CD4-positive, alpha-beta T cell (primary cell): ENCODE measurements at regions of chr15 and their contacts with region 1.

Region 1: GRCh38 chr15:39686000-39686613 is 96.5 kb downstream of the FSIP1 start:
- DNase-seq: peak in 9 of 14 experiments; percentile 3 to 70 (median 12)
- ATAC-seq: no peak
- H3K4me3 ChIP-seq: no peak overlapping the region
- H3K4me3 Mint-ChIP-seq: no peak overlapping the region
- H3K27ac ChIP-seq: no peak overlapping the region
- H3K27ac Mint-ChIP-seq: no peak overlapping the region
- H3K4me1 ChIP-seq: no peaks in the 10 kb centered on the region
- H3K4me1 Mint-ChIP-seq: no peaks in the 10 kb centered on the region
- H3K27me3 ChIP-seq: no peaks in the 10 kb centered on the region
- H3K27me3 Mint-ChIP-seq: no peaks in the 10 kb centered on the region
- CTCF ChIP-seq: peak; percentile 94

Region 2: GRCh38 chr15:38576837-38577236 is 1109.3 kb before region 1 on chr15:
- CTCF ChIA-PET with region 1: no interaction called
- POLR2A ChIA-PET with region 1: no interaction called
- intact Hi-C with region 1: no loop called
- DNase-seq: peak in 1 of 14 experiments; percentile 74
- ATAC-seq: no peak
- H3K4me3 ChIP-seq: no peak overlapping the region
- H3K4me3 Mint-ChIP-seq: peak overlapping the region; percentile 1
- H3K27ac ChIP-seq: peak overlapping the region in 1 of 2 donors; percentile 0
- H3K27ac Mint-ChIP-seq: peak overlapping the region; percentile 11
- H3K4me1 ChIP-seq: peaks cover 11% of the 10 kb centered on the region
- H3K4me1 Mint-ChIP-seq: peaks cover 32% of the 10 kb centered on the region
- H3K27me3 ChIP-seq: no peaks in the 10 kb centered on the region
- H3K27me3 Mint-ChIP-seq: no peaks in the 10 kb centered on the region
- CTCF ChIP-seq: no peak

Region 3: DNA sequence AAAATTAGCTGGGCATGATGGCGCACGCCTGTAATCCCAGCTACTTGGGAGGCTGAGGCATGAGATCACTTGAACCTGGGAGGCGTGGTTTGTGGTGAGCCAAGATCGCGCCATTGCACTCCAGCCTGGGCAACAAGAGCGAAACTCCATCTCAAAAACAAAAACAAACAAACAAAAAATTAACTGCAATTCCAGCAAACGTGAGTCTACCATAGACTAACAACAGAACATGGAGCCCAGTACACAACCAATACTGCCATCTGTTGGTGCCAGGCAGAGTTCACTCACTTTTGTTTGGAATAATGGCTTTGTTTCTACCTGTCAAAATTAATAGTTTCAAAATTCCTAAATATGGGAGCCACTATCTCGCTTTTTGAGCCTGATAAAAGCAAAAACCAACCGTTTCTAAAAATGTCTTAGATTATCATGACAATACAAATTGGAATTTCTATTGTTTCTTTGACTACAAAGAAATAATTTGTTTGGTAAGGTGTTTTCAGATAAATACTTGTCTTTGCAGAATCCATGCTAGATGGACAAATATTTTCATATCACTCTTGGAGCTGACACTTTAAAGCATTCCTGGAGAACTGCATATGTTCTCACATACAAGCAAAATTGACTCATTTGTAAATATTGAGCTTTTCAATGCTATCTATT is 188.9 kb after region 1 on chr15:
- CTCF ChIA-PET with region 1: no interaction called
- POLR2A ChIA-PET with region 1: no interaction called
- intact Hi-C with region 1: loop called in 1 of 2 experiments (anchors 5 kb)
- DNase-seq: peak in 5 of 14 experiments; percentile 6 to 51 (median 24)
- ATAC-seq: no peak
- H3K4me3 ChIP-seq: no peak overlapping the region
- H3K4me3 Mint-ChIP-seq: no peak overlapping the region
- H3K27ac ChIP-seq: no peak overlapping the region
- H3K27ac Mint-ChIP-seq: no peak overlapping the region
- H3K4me1 ChIP-seq: no peaks in the 10 kb centered on the region
- H3K4me1 Mint-ChIP-seq: no peaks in the 10 kb centered on the region
- H3K27me3 ChIP-seq: peaks cover 0 to 8% of the 10 kb centered on the region in 2 experiments
- H3K27me3 Mint-ChIP-seq: peaks cover 4% of the 10 kb centered on the region
- CTCF ChIP-seq: peak; percentile 58

Region 4: DNA sequence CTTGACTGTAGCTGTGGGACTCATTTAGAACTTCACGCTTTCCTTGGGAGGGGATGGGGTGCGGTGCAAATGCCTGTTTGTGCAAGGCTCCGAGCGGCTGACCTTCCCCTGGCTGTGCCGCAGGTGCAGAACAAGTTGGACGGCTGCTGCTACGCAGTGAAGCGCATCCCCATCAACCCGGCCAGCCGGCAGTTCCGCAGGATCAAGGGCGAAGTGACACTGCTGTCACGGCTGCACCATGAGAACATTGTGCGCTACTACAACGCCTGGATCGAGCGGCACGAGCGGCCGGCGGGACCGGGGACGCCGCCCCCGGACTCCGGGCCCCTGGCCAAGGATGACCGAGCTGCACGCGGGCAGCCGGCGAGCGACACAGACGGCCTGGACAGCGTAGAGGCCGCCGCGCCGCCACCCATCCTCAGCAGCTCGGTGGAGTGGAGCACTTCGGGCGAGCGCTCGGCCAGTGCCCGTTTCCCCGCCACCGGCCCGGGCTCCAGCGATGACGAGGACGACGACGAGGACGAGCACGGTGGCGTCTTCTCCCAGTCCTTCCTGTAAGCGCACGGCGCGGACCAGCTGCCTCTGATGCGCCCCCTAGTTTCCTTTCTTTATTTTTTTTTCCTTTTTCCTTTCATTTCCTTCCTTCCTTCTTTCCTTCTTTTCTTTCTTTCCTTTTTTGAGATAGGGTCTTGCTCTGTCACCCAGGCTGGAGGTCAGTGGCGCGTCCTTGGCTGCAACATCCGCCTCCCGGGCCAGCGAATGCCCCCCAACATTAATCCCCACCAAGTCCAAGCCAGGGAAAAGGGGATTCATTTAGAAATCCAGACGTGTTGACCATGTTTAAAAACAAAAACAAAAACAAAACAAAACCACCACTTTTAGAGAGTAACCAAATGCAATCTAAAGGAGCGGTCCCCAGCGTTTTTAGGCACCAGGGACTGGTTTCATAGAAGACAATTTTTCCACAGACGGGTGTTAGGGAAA is 290.5 kb after region 1 on chr15:
- CTCF ChIA-PET with region 1: no interaction called
- POLR2A ChIA-PET with region 1: no interaction called
- intact Hi-C with region 1: loop called in 1 of 2 experiments (anchors 10 kb)
- DNase-seq: peak in 6 of 14 experiments; percentile 1 to 43 (median 19)
- ATAC-seq: peak; percentile 43
- H3K4me3 ChIP-seq: peak overlapping the region; percentile 22
- H3K4me3 Mint-ChIP-seq: peak overlapping the region; percentile 77
- H3K27ac ChIP-seq: no peak overlapping the region
- H3K27ac Mint-ChIP-seq: no peak overlapping the region
- H3K4me1 ChIP-seq: no peaks in the 10 kb centered on the region
- H3K4me1 Mint-ChIP-seq: no peaks in the 10 kb centered on the region
- H3K27me3 ChIP-seq: no peaks in the 10 kb centered on the region
- H3K27me3 Mint-ChIP-seq: no peaks in the 10 kb centered on the region
- CTCF ChIP-seq: no peak